ENCODE measurements at regions of chr11 and their contacts with region 1.

Region 1: GRCh38 chr11:44556735-44557409 is 8.6 kb upstream of the CD82 start:
- DNase-seq: peak; percentile 59
- ATAC-seq: peak; percentile 82
- H3K4me3 ChIP-seq: no peak overlapping the region
- H3K27ac ChIP-seq: no peak overlapping the region
- H3K4me1 ChIP-seq: no peaks in the 10 kb centered on the region
- H3K27me3 ChIP-seq: no peaks in the 10 kb centered on the region; the same call in 1 of the 2 replicates
- CTCF ChIP-seq: peak; percentile 84
- POLR2A ChIP-seq: no peak
- RAD21 ChIP-seq: peak; percentile 90

Region 2: GRCh38 chr11:44519989-44520737 is 36.7 kb before region 1 on chr11:
- CTCF ChIA-PET with region 1: no interaction called
- POLR2A ChIA-PET with region 1: no interaction called
- dilution Hi-C with region 1: no loop called
- in situ Hi-C with region 1: no loop called
- intact Hi-C with region 1: no loop called
- DNase-seq: no peak
- ATAC-seq: peak; percentile 14; the same call in 1 of the 2 replicates
- H3K4me3 ChIP-seq: no peak overlapping the region
- H3K27ac ChIP-seq: no peak overlapping the region
- H3K4me1 ChIP-seq: no peaks in the 10 kb centered on the region
- H3K27me3 ChIP-seq: peaks cover 43% of the 10 kb centered on the region
- CTCF ChIP-seq: no peak
- POLR2A ChIP-seq: no peak
- RAD21 ChIP-seq: no peak

Region 3: DNA sequence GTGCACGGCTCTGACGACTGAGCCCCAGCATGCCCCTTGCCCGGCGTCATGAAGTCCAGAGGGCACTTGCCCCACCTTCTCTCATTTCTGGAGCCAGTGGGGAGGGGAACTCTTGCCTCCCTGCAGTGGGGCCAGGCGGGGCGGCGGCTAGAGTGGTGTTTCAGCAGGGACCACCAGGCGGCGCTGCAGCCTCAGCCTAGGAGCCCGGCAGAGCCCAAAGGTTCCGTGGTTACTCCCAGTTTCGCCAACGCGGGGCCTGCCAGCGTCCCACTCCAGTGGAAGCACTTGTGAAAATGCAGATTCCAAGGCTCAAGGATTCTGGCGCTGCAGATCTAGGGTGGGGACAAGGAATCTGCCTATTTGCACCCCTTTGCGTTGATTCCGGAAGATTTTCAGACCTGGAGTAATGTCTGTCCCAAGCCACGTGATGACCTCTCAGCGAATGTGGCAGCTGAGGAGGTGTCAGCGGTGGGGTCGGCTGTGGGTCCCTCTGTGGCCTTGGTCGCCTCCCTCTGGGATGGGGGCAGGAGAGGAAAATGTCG is 64.3 kb after region 1 on chr11:
- CTCF ChIA-PET with region 1: interaction called, 55 read pairs
- POLR2A ChIA-PET with region 1: no interaction called
- dilution Hi-C with region 1: no loop called
- in situ Hi-C with region 1: no loop called
- intact Hi-C with region 1: loop called (anchors 1 kb)
- DNase-seq: peak; percentile 41
- ATAC-seq: peak; percentile 88
- H3K4me3 ChIP-seq: no peak overlapping the region
- H3K27ac ChIP-seq: no peak overlapping the region
- H3K4me1 ChIP-seq: no peaks in the 10 kb centered on the region; the same call in 1 of the 2 replicates
- H3K27me3 ChIP-seq: no peaks in the 10 kb centered on the region
- CTCF ChIP-seq: peak; percentile 90
- POLR2A ChIP-seq: no peak
- RAD21 ChIP-seq: peak; percentile 97

Measured in IMR-90 (cell line).